K562 (cell line): ENCODE measurements at regions of chr11 and their contacts with region 1.

Region 1: DNA sequence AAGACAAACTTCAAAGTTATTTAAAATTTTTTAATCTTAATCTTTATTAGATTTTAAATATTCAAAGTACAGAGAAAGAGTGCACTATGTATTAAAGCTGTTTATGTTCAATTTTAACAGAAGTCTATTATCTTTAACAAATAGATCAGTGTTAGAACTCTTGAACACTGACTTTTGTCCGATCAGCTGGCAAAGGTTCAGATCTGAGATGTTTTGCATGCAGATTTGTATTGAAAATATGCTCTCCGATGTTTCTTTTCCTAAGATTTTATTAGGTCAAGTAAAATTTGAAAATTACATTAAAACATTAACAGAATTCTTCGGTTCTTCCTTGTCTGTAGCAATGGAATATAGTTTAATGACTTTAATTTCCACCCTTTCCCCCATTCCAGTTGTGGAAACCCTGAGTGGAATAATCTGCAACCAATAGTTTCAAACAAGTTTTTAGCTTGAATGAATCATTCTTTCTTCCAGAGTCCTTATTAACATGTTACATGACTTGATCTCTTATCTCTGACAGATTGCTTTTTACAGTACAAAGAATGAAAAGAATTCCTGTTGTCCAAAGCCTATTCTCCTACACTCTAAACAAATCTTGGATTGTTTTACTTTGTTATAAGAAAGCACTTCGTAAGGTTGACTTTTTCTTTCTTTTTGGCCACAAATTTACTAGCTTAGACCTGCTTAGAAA is 11.4 kb upstream of the TCP11L1 start:
- DNase-seq: no peak
- ATAC-seq: no peak
- H3K4me3 ChIP-seq: no peak overlapping the region
- H3K27ac ChIP-seq: no peak overlapping the region
- H3K4me1 ChIP-seq: no peaks in the 10 kb centered on the region
- H3K27me3 ChIP-seq: no peaks in the 10 kb centered on the region
- CTCF ChIP-seq: no peak
- EP300 ChIP-seq: no peak
- POLR2A ChIP-seq: no peak
- RAD21 ChIP-seq: no peak

Region 2: DNA sequence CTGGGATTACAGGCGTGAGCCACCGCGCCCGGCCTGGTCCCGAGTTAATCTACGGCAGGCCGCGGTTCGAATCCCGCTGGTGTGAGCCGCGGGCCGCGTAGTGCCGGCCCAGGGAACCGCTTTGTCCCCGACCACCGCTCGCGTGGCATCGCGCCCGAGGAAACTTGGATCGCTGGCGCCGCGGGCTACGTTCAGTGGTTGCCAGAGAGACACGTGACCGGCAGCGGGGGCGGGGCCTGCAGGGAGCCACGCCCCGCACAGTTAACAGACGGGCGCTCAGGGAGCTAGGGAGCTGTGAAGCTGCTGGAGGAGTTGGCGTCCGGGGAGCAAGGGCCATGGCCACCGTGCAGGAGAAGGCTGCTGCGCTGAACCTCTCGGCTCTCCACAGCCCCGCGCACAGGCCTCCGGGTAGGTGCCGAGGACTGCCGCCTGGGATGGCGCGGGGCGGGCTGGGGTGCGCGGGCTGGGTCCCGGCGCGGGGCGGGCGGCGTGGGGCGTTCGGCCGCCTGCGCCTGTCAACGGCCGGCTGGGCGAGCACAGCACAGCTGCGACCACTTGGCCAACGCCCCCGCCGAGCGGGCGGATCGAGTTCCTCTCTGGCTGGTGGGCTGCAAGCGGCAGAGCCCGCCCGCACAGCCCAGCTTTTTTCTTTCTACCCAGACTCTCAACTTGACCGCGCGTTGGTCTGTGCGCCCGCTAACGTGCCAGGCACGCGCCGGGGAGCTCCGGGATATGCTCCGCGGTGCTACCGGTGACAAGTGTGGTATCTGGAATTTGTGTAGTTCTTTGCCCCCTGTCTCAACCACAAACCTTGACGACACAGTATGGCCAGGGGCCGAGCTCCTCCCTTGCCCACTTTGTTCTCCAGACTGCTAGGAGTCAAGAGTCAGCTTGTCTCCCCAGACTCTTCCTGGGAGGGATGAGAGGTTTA is 12.1 kb before region 1 on chr11 and contains the start of gene DEPDC7:
- CTCF ChIA-PET with region 1: no interaction called
- POLR2A ChIA-PET with region 1: interaction called, 25 read pairs
- in situ Hi-C with region 1: no loop called
- intact Hi-C with region 1: no loop called
- DNase-seq: peak; percentile 92 to 97 (median 92)
- ATAC-seq: peak; percentile 98
- H3K4me3 ChIP-seq: peak within 1 kb of the TSS; percentile 78
- H3K27ac ChIP-seq: peak within 1 kb of the TSS; percentile 58
- H3K4me1 ChIP-seq: peaks cover 16% of the 10 kb centered on the region in 2 experiments; a peak in 4 of 5 replicates
- H3K27me3 ChIP-seq: no peaks in the 10 kb centered on the region
- CTCF ChIP-seq: no peak
- EP300 ChIP-seq: no peak
- POLR2A ChIP-seq: peak; percentile 87
- RAD21 ChIP-seq: no peak
- polyA plus RNA-seq, gene DEPDC7: 5.4 to 8.1 TPM

Region 3: GRCh38 chr11:33039274-33040032 is 11.5 kb after region 1 on chr11 and contains the start of gene TCP11L1:
- CTCF ChIA-PET with region 1: no interaction called
- POLR2A ChIA-PET with region 1: interaction called, 10 read pairs
- in situ Hi-C with region 1: no loop called
- intact Hi-C with region 1: no loop called
- DNase-seq: peak; percentile 66 to 90 (median 87)
- ATAC-seq: peak; percentile 93
- H3K4me3 ChIP-seq: peak within 1 kb of the TSS; percentile 89
- H3K27ac ChIP-seq: peak within 1 kb of the TSS; percentile 99
- H3K4me1 ChIP-seq: peaks cover 0 to 19% of the 10 kb centered on the region in 2 experiments; a peak in 2 of 5 replicates
- H3K27me3 ChIP-seq: no peaks in the 10 kb centered on the region
- CTCF ChIP-seq: no peak
- EP300 ChIP-seq: no peak
- POLR2A ChIP-seq: peak; percentile 69
- RAD21 ChIP-seq: no peak
- polyA plus RNA-seq, gene TCP11L1: 1.6 TPM